Naive thymus-derived CD4-positive, alpha-beta T cell (primary cell): ENCODE measurements at regions of chr6 and their contacts with region 1.

Region 1: DNA sequence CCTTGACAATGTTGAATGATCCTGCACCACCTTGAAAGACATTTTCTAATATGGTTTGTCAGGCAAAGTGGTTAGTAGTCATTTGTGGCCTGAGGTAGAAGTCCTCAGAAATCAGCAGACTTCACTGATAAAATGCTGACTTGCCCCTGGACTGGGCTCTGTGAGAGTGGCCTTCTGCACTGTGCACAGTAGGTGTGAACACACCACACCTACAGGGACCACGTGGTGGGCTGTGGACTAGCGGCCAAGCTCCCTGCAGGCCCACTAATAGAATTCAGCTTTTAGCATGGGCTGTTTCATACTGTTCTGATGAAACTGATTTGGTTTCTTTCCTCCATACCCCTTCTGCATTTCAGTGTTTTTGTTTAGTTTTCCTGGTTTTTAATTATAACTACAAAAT is 7.3 kb downstream of the BPHL start:
- DNase-seq: no peak
- ATAC-seq: no peak
- H3K4me3 ChIP-seq: no peak overlapping the region
- H3K4me3 Mint-ChIP-seq: no peak overlapping the region
- H3K27ac ChIP-seq: no peak overlapping the region
- H3K27ac Mint-ChIP-seq: no peak overlapping the region
- H3K4me1 ChIP-seq: no peaks in the 10 kb centered on the region
- H3K4me1 Mint-ChIP-seq: peaks cover 0 to 3% (median 0%) of the 10 kb centered on the region in 7 donors
- H3K27me3 ChIP-seq: no peaks in the 10 kb centered on the region
- H3K27me3 Mint-ChIP-seq: no peaks in the 10 kb centered on the region

Region 2: DNA sequence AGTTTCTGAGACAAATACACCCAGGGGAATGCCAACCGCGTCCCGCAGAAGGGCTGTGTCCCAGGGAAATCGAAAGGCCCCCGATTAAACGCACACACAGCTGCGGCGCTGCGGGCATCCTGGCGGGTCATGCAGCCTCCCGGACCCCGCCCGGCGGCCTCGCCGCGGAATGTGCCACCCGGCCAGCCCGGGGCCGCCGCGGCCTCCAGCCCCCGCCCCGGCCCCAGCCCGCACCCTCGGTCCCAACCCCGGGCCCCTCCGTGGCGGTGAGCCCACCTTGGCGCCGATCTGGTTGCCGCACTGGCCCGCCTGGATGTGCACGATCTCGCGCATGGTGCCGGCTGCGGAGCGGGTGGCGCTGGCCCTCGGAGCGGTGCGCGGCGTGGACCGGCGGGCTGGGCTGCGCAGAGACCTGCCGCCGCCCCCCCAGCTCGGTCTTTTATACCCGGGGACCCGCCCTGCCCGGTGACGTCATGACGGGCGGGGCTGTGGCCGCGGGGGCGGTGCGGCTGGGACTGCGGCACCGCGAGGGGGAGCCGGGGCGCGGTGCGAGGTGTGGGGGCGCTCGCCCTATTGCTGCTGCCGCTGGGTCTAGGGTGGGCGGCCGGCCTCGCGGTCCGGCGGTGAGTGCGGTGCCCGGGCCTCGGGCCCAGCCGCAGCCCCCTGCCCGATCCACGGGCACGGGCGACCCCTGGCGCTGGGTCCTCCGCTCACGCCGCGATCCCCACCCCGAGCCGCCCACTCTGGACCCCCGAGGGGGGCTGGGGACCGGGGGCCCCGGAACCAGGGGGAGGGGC is 31.5 kb after region 1 on chr6 and contains the start of gene TUBB2A:
- CTCF ChIA-PET with region 1: interaction called, 3 read pairs
- POLR2A ChIA-PET with region 1: interaction called, 3 read pairs
- intact Hi-C with region 1: loop called (anchors 1 to 2 kb)
- DNase-seq: peak; percentile 83 to 96 (median 90)
- ATAC-seq: peak; percentile 87
- H3K4me3 ChIP-seq: peak within 1 kb of the TSS; percentile 61
- H3K4me3 Mint-ChIP-seq: peak within 1 kb of the TSS; percentile 81 to 94 (median 92)
- H3K27ac ChIP-seq: peak within 1 kb of the TSS; percentile 86
- H3K27ac Mint-ChIP-seq: peak within 1 kb of the TSS; percentile 75 to 96 (median 93)
- H3K4me1 ChIP-seq: peaks cover 15 to 17% of the 10 kb centered on the region in 2 donors
- H3K4me1 Mint-ChIP-seq: peaks cover 4 to 37% (median 33%) of the 10 kb centered on the region in 7 donors
- H3K27me3 ChIP-seq: no peaks in the 10 kb centered on the region
- H3K27me3 Mint-ChIP-seq: peaks cover 0 to 52% (median 4%) of the 10 kb centered on the region in 5 donors
- total RNA-seq, gene TUBB2A: 2.2 to 39.6 (median 3.1) TPM

Region 3: GRCh38 chr6:3162565-3163247 is 36.9 kb after region 1 on chr6:
- CTCF ChIA-PET with region 1: no interaction called
- POLR2A ChIA-PET with region 1: no interaction called
- intact Hi-C with region 1: loop called (anchors 1 to 2 kb)
- DNase-seq: peak; percentile 29 to 62 (median 51)
- ATAC-seq: peak; percentile 63
- H3K4me3 ChIP-seq: peak overlapping the region; percentile 73
- H3K4me3 Mint-ChIP-seq: peak overlapping the region; percentile 78 to 87 (median 84)
- H3K27ac ChIP-seq: peak overlapping the region; percentile 70
- H3K27ac Mint-ChIP-seq: peak overlapping the region in 8 of 9 donors; percentile 37 to 92 (median 64)
- H3K4me1 ChIP-seq: peaks cover 19 to 22% of the 10 kb centered on the region in 2 donors
- H3K4me1 Mint-ChIP-seq: peaks cover 0 to 40% (median 36%) of the 10 kb centered on the region in 7 donors
- H3K27me3 ChIP-seq: no peaks in the 10 kb centered on the region
- H3K27me3 Mint-ChIP-seq: peaks cover 0 to 68% (median 6%) of the 10 kb centered on the region in 5 donors

Region 4: DNA sequence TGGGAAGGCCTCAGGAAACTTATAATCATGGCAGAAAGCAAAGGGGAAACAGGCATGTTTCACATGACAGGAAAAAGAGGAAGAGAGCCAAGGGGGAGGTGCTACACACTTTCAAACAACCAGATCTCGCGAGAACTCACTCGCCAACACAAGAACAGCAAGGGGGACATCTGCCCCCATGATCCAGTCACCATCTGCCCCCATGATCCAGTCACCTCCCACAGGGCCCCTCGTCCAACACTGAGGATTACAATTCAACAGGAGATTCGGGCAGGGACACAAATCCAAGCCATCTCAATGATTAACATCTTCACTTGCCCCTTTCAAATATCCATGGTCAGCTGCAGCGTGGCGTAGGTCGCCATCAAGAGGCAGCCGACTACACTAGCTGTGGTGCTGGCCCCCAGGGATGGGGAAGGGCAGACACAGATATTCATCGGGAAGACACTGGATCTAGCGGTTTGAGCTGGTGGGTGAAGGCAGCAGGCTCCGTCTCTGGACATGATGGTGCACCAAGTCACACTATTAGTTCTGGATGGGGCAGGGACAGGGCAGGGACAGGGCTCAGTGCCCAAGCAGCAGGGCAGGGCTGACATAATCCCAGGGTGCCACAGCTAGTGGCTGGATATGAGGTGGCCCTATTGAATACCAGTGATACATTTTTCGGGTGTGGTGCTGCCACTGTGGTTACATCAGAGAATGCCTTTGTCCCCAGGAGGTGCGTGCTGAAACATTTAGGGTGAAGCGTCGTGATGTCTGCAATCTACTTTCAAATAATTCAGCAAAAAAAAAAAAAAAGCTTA is 70.1 kb after region 1 on chr6:
- CTCF ChIA-PET with region 1: no interaction called
- POLR2A ChIA-PET with region 1: no interaction called
- intact Hi-C with region 1: loop called in 1 of 2 experiments (anchors 1 kb)
- DNase-seq: no peak
- ATAC-seq: no peak
- H3K4me3 ChIP-seq: no peak overlapping the region
- H3K4me3 Mint-ChIP-seq: no peak overlapping the region
- H3K27ac ChIP-seq: no peak overlapping the region
- H3K27ac Mint-ChIP-seq: no peak overlapping the region
- H3K4me1 ChIP-seq: no peaks in the 10 kb centered on the region
- H3K4me1 Mint-ChIP-seq: no peaks in the 10 kb centered on the region
- H3K27me3 ChIP-seq: peaks cover 0 to 3% of the 10 kb centered on the region in 2 donors
- H3K27me3 Mint-ChIP-seq: peaks cover 0 to 13% (median 7%) of the 10 kb centered on the region in 5 donors

Region 5: GRCh38 chr6:3251462-3252314 is 125.9 kb after region 1 on chr6:
- CTCF ChIA-PET with region 1: interaction called, 15 read pairs
- POLR2A ChIA-PET with region 1: no interaction called
- intact Hi-C with region 1: loop called (anchors 1 kb)
- DNase-seq: peak; percentile 58 to 82 (median 76)
- ATAC-seq: peak; percentile 94
- H3K4me3 ChIP-seq: no peak overlapping the region
- H3K4me3 Mint-ChIP-seq: peak overlapping the region in 5 of 10 donors; percentile 11 to 60 (median 40)
- H3K27ac ChIP-seq: no peak overlapping the region
- H3K27ac Mint-ChIP-seq: peak overlapping the region in 1 of 9 donors; percentile 54
- H3K4me1 ChIP-seq: peaks cover 7 to 8% of the 10 kb centered on the region in 2 donors
- H3K4me1 Mint-ChIP-seq: peaks cover 6 to 12% (median 7%) of the 10 kb centered on the region in 7 donors
- H3K27me3 ChIP-seq: no peaks in the 10 kb centered on the region
- H3K27me3 Mint-ChIP-seq: peaks cover 17 to 51% (median 27%) of the 10 kb centered on the region in 5 donors

Region 6: GRCh38 chr6:3258720-3259490 is 133.1 kb after region 1 on chr6 and contains the start of gene PSMG4:
- CTCF ChIA-PET with region 1: interaction called, 3 read pairs
- POLR2A ChIA-PET with region 1: no interaction called
- intact Hi-C with region 1: loop called (anchors 2 kb)
- DNase-seq: peak; percentile 81 to 98 (median 89)
- ATAC-seq: peak; percentile 97
- H3K4me3 ChIP-seq: peak within 1 kb of the TSS; percentile 85
- H3K4me3 Mint-ChIP-seq: peak within 1 kb of the TSS; percentile 85 to 99 (median 97)
- H3K27ac ChIP-seq: peak within 1 kb of the TSS; percentile 80
- H3K27ac Mint-ChIP-seq: peak within 1 kb of the TSS; percentile 84 to 98 (median 92)
- H3K4me1 ChIP-seq: peaks cover 19 to 26% of the 10 kb centered on the region in 2 donors
- H3K4me1 Mint-ChIP-seq: peaks cover 28 to 45% (median 42%) of the 10 kb centered on the region in 7 donors
- H3K27me3 ChIP-seq: no peaks in the 10 kb centered on the region
- H3K27me3 Mint-ChIP-seq: peaks cover 0 to 25% (median 0%) of the 10 kb centered on the region in 5 donors
- total RNA-seq, gene PSMG4: 15.6 to 45.0 (median 27.7) TPM

Region 7: GRCh38 chr6:3732345-3733141 is 606.7 kb after region 1 on chr6:
- CTCF ChIA-PET with region 1: interaction called, 4 read pairs
- POLR2A ChIA-PET with region 1: interaction called, 4 read pairs
- intact Hi-C with region 1: loop called in 1 of 2 experiments (anchors 1 kb)
- DNase-seq: peak; percentile 34 to 70 (median 60)
- ATAC-seq: peak; percentile 85
- H3K4me3 ChIP-seq: no peak overlapping the region
- H3K4me3 Mint-ChIP-seq: peak overlapping the region in 1 of 10 donors; percentile 42
- H3K27ac ChIP-seq: no peak overlapping the region
- H3K27ac Mint-ChIP-seq: peak overlapping the region in 1 of 9 donors; percentile 88
- H3K4me1 ChIP-seq: no peaks in the 10 kb centered on the region
- H3K4me1 Mint-ChIP-seq: peaks cover 0 to 4% (median 3%) of the 10 kb centered on the region in 7 donors
- H3K27me3 ChIP-seq: no peaks in the 10 kb centered on the region
- H3K27me3 Mint-ChIP-seq: peaks cover 6 to 22% (median 15%) of the 10 kb centered on the region in 5 donors

Region 8: GRCh38 chr6:3742426-3743344 is 616.9 kb after region 1 on chr6:
- CTCF ChIA-PET with region 1: no interaction called
- POLR2A ChIA-PET with region 1: no interaction called
- intact Hi-C with region 1: no loop called
- DNase-seq: peak; percentile 73 to 92 (median 85)
- ATAC-seq: peak; percentile 94
- H3K4me3 ChIP-seq: no peak overlapping the region
- H3K4me3 Mint-ChIP-seq: peak overlapping the region; percentile 26 to 73 (median 58)
- H3K27ac ChIP-seq: no peak overlapping the region
- H3K27ac Mint-ChIP-seq: peak overlapping the region in 7 of 9 donors; percentile 2 to 81 (median 38)
- H3K4me1 ChIP-seq: peaks cover 0 to 5% of the 10 kb centered on the region in 2 donors
- H3K4me1 Mint-ChIP-seq: peaks cover 0 to 14% (median 12%) of the 10 kb centered on the region in 7 donors
- H3K27me3 ChIP-seq: no peaks in the 10 kb centered on the region
- H3K27me3 Mint-ChIP-seq: peaks cover 11 to 29% (median 17%) of the 10 kb centered on the region in 5 donors